ENCODE measurements at regions of chr4 and their contacts with region 1.

Region 1: DNA sequence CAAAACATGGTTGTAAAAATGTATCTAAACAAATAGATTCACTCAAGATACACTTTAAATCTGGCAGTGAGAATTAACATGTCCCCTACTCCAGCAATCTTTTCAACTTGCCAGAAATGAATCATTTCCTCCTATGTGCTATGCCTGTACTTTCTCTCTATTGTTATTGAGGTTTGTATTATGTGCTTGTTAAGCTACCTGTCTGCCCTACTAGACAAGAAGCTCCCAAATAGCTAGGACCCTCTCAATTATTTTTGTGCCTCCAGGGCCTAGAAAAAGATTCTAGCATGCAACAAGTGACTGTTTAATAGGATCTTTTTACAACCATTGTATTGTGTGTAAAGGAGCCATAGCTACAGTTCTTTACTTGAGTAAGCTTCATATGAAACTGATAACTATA is 3.5 kb upstream of the SAP30 start:
- DNase-seq: no peak
- H3K4me3 ChIP-seq: peak overlapping the region in 2 of 4 donors; percentile 0 to 83
- H3K27ac ChIP-seq: peak overlapping the region in 2 of 4 donors; percentile 37 to 96
- H3K4me1 ChIP-seq: peaks cover 0 to 41% (median 14%) of the 10 kb centered on the region in 3 donors
- H3K27me3 ChIP-seq: no peaks in the 10 kb centered on the region
- CTCF ChIP-seq: no peak
- POLR2A ChIP-seq: no peak

Region 2: GRCh38 chr4:173334085-173334772 is 33.1 kb before region 1 on chr4 and contains the start of gene HMGB2:
- intact Hi-C with region 1: loop called (anchors 5 kb)
- DNase-seq: peak; percentile 100
- H3K4me3 ChIP-seq: peak within 1 kb of the TSS; percentile 53 to 94 (median 90)
- H3K27ac ChIP-seq: peak within 1 kb of the TSS; percentile 93 to 100 (median 99)
- H3K4me1 ChIP-seq: peaks cover 0 to 42% (median 11%) of the 10 kb centered on the region in 3 donors
- H3K27me3 ChIP-seq: no peaks in the 10 kb centered on the region
- CTCF ChIP-seq: peak in 1 of 6 experiments; percentile 13
- POLR2A ChIP-seq: peak in 3 of 4 donors; percentile 93 to 99 (median 99)
- total RNA-seq, gene HMGB2: 27.3 to 83.6 (median 65.3) TPM